Dendritic cell treated with granulocyte-macrophage colony-stimulating factor and Interleukin-4, amounts not matched to agents 40 ng/mL and 50 ng/mL, for 4 days (primary cell): ENCODE measurements at regions of chr20 and their contacts with region 1.

Region 1: DNA sequence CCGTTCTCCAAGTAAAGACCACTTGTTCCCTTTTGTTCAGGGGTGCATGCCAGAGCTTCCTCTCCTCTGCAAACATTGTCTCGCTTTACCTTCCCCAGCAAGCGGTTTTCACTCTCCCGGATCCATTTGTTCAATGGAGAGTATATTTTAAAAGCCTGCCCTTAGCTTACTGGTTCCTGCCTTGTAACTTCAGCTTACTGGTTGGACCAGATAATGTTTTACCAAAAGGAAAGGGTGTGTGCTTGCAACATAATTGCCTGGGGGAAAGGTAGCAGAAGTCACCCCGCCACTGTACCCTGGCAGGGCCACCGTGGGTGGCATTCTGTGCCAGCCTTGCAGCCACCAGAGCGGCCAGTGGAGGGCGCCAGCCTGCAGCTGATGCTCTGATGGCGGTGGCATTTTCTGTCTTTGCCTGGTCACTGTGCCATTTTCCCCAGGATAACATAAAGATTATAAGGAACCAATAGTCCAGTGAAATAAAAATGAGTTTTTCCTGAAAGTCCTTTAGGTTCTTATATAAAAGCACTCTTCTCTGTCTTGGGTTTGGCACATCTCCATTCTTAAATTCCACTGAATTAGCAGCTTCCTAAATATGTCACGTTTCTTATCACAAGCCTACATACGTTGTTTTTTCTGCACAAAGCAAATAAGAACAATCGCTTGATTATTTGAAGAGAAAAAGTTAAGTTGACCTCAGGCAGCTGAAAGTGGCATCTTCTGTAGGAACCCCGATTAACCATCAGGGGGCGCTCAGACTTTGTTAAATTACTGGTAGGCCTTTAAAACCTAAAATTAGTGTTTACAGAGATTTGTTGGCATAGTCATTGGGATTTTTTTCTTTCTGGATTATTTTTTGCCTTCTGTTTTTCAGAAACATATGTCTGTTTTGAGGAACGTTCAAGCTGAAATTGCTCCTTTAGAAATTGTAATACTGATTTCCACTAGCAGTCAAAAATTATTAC is 67.4 kb upstream of the XRN2 start:
- H3K4me3 Mint-ChIP-seq: no peak overlapping the region
- H3K27ac Mint-ChIP-seq: no peak overlapping the region
- H3K4me1 Mint-ChIP-seq: peaks cover 3% of the 10 kb centered on the region
- H3K27me3 Mint-ChIP-seq: no peaks in the 10 kb centered on the region

Region 2: GRCh38 chr20:21352703-21353102 is 116.9 kb after region 1 on chr20:
- intact Hi-C with region 1: loop called (anchors 10 kb)
- H3K4me3 Mint-ChIP-seq: no peak overlapping the region
- H3K27ac Mint-ChIP-seq: no peak overlapping the region
- H3K4me1 Mint-ChIP-seq: no peaks in the 10 kb centered on the region
- H3K27me3 Mint-ChIP-seq: no peaks in the 10 kb centered on the region

Region 3: DNA sequence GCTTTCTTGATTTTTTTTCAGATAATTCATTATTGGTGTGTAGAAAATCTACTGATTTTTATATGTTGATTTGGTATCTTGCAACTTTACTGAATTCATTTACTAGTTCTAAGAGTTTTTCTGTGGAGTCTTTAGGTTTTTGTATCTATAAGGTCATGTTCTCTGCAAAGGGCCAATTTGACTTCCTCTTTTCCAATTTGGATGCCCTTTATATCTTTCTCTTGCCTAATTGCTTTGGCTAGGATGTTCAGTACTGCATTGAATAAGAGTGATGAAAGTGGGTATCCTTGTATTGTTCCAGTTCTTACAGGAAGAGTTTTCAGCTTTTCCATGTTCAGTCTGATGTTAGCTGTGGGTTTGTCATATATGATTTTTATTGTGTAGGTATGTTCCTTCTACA is 176.0 kb after region 1 on chr20:
- intact Hi-C with region 1: no loop called
- H3K4me3 Mint-ChIP-seq: no peak overlapping the region
- H3K27ac Mint-ChIP-seq: no peak overlapping the region
- H3K4me1 Mint-ChIP-seq: no peaks in the 10 kb centered on the region
- H3K27me3 Mint-ChIP-seq: peaks cover 60% of the 10 kb centered on the region